ENCODE measurements at regions of chr5 and their contacts with region 1.

Region 1: DNA sequence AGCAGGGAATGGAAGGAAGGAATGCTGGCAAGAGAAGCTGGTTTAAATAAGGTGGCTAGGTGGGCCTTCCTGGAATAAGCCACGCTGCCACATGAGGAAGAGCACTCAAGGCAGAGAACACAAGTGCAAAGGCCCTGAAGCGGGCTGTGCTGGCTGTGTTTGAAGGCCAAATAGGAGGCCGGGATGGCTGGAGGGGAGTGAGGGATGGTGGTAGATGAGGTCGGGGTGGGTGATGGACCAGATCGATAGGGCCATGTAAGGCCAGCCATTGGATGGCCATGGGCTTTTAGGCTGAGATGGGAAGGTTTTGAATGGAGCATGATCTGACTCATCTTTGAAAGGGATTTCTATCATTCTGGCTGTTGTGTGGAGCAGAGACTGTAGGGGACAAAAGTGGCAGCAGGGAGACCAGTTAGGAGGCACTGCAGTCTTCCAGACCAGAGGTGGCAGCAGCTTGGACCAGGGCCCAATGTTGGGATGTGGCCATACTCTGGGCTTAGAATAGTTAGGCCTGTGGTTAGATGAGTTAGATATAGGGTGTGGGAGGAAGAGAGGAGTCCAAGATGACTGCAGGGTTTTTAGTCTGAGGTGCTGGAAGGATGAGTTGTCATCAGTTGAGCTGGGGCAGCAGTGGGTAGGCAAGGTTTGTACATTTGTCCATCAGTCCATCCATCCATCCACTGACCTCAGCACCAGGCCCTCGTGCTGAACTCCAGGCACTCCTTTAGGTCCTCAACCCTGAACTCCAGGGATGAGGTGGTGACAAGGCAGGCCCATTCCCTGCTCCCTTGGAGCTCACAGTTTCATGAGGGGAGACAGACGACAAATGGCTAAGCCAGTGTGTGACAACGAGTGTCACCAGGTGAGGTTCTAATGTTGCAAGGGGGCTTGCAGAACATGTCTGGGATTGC is 30.3 kb downstream of the NDST1 start:
- DNase-seq: no peak
- H3K4me3 ChIP-seq: no peak overlapping the region
- H3K27ac ChIP-seq: no peak overlapping the region
- H3K4me1 ChIP-seq: peaks cover 0 to 3% (median 0%) of the 10 kb centered on the region in 4 experiments; a peak in 2 of 7 replicates
- H3K27me3 ChIP-seq: no peaks in the 10 kb centered on the region
- CTCF ChIP-seq: no peak; a peak in 1 of 4 replicates
- EP300 ChIP-seq: no peak
- POLR2A ChIP-seq: no peak
- RAD21 ChIP-seq: no peak

Region 2: DNA sequence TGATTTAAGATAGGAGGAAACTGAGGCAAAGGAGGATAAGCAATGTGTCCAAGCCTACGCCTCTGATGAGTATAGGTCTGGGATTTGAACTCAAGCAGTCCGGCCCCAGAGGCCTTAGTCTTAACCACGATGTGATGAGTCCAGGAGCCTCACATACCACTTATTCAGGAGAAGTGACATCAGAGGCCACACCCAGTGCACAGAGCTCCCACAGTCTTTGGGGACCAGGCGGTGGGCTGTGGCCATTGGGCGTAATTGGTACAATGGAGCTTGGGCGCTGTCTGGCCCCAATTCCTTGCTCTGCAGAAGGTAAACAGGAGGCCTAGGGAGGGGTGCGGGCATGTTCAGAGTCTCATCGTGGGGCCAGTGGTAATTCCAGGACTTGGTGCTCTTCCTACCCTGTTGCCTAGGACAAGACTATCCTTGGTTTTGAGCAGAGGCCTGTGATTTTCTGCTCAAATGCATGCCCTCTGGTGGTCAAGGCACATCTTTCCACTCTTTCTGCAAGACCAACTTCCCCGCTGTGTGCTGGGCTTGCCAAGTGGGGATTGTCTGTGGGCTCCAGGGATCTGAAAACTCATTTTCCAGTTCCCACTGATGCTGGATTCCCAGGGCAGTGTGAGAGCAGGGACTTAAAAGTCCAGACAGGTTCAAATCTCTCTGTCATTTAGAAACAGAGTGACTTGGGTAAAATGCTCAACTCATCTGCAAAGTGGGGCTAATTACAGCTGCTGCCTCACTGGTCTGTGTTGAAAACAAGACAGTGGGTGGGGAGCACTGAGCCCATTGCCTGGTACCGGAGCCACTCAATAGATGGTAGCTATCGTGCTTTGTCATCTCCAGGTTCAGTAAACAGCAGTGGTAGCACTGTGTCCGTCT is 14.6 kb before region 1 on chr5:
- CTCF ChIA-PET with region 1: interaction called, 229 read pairs
- POLR2A ChIA-PET with region 1: interaction called, 5 read pairs
- DNase-seq: no peak
- H3K4me3 ChIP-seq: no peak overlapping the region
- H3K27ac ChIP-seq: no peak overlapping the region
- H3K4me1 ChIP-seq: peaks cover 7 to 25% (median 14%) of the 10 kb centered on the region in 4 experiments
- H3K27me3 ChIP-seq: no peaks in the 10 kb centered on the region
- CTCF ChIP-seq: peak; percentile 61 to 86 (median 71)
- EP300 ChIP-seq: no peak
- POLR2A ChIP-seq: no peak
- RAD21 ChIP-seq: peak; percentile 65 to 78

Region 3: DNA sequence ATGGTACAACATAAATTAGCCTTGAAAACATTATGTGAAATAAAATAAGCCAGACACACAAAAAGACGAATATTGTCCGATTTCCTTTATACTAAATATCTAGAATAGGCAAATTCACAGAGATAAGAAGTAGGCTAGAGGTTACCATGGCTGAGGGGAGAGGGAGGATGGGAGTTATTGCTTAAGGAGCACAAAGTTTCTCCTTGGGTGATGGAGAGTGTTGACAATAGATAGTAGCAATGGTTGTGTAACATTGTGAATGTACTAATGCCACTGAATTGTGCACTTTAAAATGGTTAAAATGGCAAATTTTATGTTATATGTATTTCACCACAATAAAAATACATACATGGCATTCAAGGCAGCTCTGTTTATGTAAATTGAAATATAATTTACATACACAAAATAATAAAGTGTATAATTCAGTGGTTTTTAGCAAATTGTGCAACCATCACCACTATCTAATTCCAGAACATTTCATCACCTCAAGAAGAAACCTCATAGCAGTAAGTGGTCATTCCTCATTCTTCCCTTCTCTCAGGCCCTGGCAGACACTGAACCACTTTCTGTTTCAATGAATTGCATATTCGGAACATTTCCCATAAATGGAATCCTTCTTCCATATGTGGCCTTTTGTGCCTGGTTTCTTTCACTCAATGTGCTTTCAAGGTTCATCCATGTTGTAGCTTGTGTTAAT is 28.9 kb after region 1 on chr5:
- CTCF ChIA-PET with region 1: no interaction called
- POLR2A ChIA-PET with region 1: no interaction called
- DNase-seq: no peak
- H3K4me3 ChIP-seq: no peak overlapping the region
- H3K27ac ChIP-seq: no peak overlapping the region
- H3K4me1 ChIP-seq: no peaks in the 10 kb centered on the region
- H3K27me3 ChIP-seq: no peaks in the 10 kb centered on the region
- CTCF ChIP-seq: no peak
- EP300 ChIP-seq: no peak
- POLR2A ChIP-seq: no peak
- RAD21 ChIP-seq: no peak